ENCODE measurements at regions of chr3 and their contacts with region 1.

Region 1: GRCh38 chr3:70856414-70857162 is 544.1 kb upstream of the MDFIC2 start:
- DNase-seq: no peak
- H3K4me3 Mint-ChIP-seq: no peak overlapping the region
- H3K27ac Mint-ChIP-seq: peak overlapping the region; percentile 54
- H3K4me1 Mint-ChIP-seq: peaks cover 12% of the 10 kb centered on the region
- H3K27me3 Mint-ChIP-seq: peaks cover 19% of the 10 kb centered on the region

Region 2: GRCh38 chr3:70771426-70772147 is 85.0 kb before region 1 on chr3:
- intact Hi-C with region 1: loop called (anchors 1 kb)
- DNase-seq: no peak
- H3K4me3 Mint-ChIP-seq: no peak overlapping the region
- H3K27ac Mint-ChIP-seq: no peak overlapping the region
- H3K4me1 Mint-ChIP-seq: no peaks in the 10 kb centered on the region
- H3K27me3 Mint-ChIP-seq: peaks cover 29% of the 10 kb centered on the region